Body of pancreas (tissue), 4 donors: ENCODE measurements at regions of chr17 and their contacts with region 1.

Region 1: DNA sequence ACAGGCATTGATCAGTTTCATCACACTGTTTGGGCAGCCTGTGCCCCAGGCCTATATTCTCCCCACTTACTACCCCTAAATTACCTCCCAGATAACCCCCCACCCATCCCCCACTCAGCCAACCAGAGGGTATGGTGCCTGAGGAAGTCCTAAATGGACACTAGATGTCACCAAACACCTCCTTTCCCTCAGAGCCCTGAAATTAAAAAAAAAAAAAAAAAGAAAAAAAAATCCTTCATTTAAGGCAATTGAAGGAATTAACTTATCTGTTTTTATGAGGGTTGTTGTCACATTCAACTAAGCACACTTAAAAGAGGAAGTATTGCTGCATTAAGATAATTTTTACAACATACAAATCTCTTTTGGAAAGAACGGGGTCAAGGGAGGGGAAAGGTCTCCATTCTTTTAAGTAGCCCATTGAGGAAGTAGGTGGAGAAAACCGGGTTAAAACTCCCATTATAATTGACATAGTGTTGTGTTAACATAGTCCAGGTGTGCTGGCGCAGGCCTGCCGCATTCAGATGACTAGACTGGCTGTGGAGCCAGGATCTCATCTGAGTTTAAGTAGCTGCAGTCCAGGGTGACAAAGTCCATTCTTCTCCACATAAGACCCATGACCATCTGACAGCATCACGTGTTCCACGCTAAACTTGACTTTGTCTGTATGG is 46.3 kb downstream of the SNX11 start:
- DNase-seq: peak; percentile 69 to 89 (median 80)
- ATAC-seq: peak; percentile 93
- H3K4me3 ChIP-seq: no peak overlapping the region
- H3K27ac ChIP-seq: peak overlapping the region; percentile 4 to 58 (median 38)
- H3K4me1 ChIP-seq: peaks cover 14% of the 10 kb centered on the region
- H3K27me3 ChIP-seq: no peaks in the 10 kb centered on the region
- CTCF ChIP-seq: peak; percentile 51 to 92 (median 62)
- POLR2A ChIP-seq: no peak

Region 2: DNA sequence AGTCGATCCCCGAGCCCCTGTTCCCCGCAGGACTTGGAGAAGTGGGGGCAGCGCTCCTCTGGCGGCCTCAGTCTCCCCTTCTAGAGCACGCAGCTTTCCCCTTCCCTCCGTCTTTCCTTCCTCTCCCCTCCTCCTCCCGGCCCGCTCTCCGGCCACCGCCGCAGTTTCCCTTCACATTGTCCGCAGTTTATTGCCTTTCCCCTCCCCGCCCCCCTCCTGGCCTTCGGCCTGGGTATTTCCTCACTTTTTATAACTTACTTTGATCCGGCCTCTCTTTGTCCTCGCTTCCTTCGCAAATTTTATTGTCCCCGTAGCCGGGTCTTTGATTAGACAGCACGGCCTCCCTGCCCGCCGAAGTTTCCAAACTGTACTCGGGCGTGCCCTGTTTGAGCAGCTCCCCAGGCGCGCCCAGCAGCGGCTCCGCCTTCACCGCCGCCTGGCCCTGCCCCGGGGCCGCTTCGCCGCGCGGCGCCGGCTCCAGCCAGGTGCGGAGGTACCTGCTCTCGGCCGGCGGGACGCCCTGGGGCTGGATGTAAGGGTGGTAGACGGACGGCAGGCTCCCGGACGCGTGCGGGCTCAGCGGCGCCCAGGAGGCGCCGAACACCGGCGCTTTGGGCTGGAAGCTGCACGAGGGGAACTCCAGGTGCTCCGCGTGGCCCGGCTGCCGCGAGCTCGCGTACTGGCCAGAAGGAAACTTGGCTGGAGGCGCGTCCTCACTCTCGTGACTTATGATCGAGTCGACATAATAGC is 471.8 kb after region 1 on chr17:
- intact Hi-C with region 1: loop called (anchors 10 kb)
- DNase-seq: peak in 3 of 4 donors; percentile 13 to 39 (median 28)
- ATAC-seq: peak; percentile 72
- H3K4me3 ChIP-seq: no peak overlapping the region
- H3K27ac ChIP-seq: no peak overlapping the region
- H3K4me1 ChIP-seq: peaks cover 19% of the 10 kb centered on the region
- H3K27me3 ChIP-seq: peaks cover 0 to 66% of the 10 kb centered on the region in 2 donors
- CTCF ChIP-seq: no peak
- POLR2A ChIP-seq: no peak